Colonic mucosa (tissue), 4 donors: ENCODE measurements at regions of chr3 and their contacts with region 1.

Region 1: GRCh38 chr3:71006810-71007785 is 576.4 kb downstream of the FOXP1 start:
- DNase-seq: no peak
- H3K4me3 ChIP-seq: no peak overlapping the region
- H3K27ac ChIP-seq: peak overlapping the region; percentile 30
- H3K4me1 ChIP-seq: no peaks in the 10 kb centered on the region
- H3K27me3 ChIP-seq: no peaks in the 10 kb centered on the region
- CTCF ChIP-seq: peak; percentile 48

Region 2: DNA sequence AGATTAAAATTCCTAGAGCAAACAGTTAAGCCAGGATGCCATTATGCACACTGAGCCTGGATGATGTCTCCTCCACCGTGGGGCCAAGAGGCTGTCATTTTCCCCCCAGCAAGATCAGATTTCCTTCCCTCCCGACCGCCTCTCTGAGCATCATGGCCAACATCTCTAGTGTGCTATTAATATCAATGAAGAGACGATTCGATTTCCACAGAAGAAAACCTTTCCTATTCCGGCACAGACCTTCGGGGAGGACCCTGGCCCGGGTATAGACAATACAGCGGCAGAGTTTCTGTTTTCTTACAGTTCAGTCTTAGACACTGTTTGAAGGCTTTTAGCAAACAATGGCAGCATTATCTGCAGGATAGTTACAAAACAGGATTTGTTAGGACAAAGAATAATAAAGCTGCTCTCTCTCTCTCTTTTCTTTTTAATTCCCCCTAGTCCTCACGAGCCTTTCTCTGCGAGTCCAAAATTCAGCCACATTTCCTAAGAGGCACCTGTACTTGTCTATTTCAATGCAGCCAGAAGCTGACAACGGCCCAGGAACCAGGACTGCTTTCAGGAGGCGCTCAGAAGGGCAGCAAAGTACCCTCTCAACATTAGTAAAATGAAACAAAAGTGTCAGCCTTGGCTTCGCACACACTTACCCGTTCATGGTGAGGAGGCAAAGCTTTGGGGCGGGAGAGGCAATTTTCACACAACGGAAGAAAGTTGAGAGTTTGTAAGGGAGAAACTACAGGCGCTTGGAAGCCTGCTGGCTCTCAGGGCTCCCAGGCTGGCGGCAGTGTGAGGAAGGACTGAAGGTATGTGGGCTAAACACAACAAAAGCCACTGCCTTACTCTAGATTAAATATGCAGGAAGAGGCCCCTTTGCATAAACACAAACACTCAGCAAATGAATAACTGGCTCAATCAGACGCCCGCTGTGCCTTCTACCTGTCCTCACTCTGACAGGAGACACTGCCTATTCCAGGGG is 298.4 kb after region 1 on chr3:
- intact Hi-C with region 1: loop called (anchors 10 kb)
- DNase-seq: peak; percentile 36
- H3K4me3 ChIP-seq: peak overlapping the region; percentile 18
- H3K27ac ChIP-seq: peak overlapping the region; percentile 63
- H3K4me1 ChIP-seq: no peaks in the 10 kb centered on the region
- H3K27me3 ChIP-seq: no peaks in the 10 kb centered on the region
- CTCF ChIP-seq: no peak